Gastrocnemius medialis (tissue), 4 donors: ENCODE measurements at regions of chr3 and their contacts with region 1.

Region 1: GRCh38 chr3:196502775-196503195 is 783 bp downstream of the RNF168 start:
- DNase-seq: peak; percentile 18 to 50
- ATAC-seq: peak; percentile 46 to 49
- H3K4me3 ChIP-seq: peak overlapping the region; percentile 87 to 92 (median 88)
- H3K27ac ChIP-seq: peak overlapping the region; percentile 91 to 95 (median 93)
- H3K4me1 ChIP-seq: peaks cover 18 to 22% of the 10 kb centered on the region in 2 donors
- H3K27me3 ChIP-seq: no peaks in the 10 kb centered on the region
- CTCF ChIP-seq: no peak
- POLR2A ChIP-seq: no peak

Region 2: DNA sequence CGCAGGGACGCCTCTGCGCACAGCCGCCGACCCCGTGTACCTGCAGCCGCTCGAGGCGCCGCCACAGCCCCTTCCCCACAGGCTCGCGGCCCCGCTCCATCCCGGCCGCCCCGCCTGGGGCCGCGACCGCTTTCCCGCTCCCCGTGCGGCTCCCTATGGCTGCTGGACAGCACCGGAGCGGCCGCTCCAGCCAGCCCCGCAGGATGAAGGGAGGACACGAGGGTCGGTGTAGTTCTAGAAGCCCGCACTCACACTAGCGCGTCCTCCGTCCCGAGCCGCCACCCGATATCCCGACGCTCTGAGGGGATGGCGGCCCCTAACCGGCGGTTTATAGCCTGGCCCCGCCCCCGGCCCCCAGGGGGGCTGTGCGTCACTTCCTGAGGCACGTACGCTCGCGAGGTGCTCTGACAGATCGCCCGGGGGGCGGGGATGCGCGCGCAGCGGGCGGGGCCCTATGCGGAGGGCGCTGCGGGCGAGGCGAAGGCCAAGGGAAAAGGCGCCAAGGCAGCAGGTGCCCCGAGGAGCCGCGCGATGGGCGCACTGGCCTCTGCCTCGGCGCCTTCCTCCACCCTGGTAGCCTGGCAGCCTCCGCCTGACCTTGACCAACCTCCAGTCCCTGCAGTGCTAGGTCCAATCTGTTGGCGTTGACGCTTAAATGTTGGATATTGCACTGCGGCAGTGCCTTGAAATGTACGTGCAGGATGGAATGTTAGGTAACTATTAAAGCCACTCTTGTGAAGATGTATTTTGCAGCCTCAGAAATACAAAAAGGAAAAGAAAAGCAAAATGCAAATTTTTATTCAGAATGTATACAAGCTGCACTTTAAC is 420.8 kb before region 1 on chr3 and contains the start of gene TFRC:
- in situ Hi-C with region 1: loop called in 1 of 4 experiments (anchors 25 kb)
- intact Hi-C with region 1: loop called (anchors 1 kb)
- DNase-seq: peak; percentile 90 to 98
- ATAC-seq: peak; percentile 86 to 95
- H3K4me3 ChIP-seq: peak within 1 kb of the TSS; percentile 70 to 98 (median 92)
- H3K27ac ChIP-seq: peak within 1 kb of the TSS; percentile 89 to 100 (median 98)
- H3K4me1 ChIP-seq: peaks cover 31 to 40% of the 10 kb centered on the region in 2 donors
- H3K27me3 ChIP-seq: no peaks in the 10 kb centered on the region
- CTCF ChIP-seq: no peak
- POLR2A ChIP-seq: peak; percentile 98 to 99
- total RNA-seq, gene TFRC: 23.1 to 162 (median 56.3) TPM

Region 3: GRCh38 chr3:196287440-196288148 is 215.2 kb before region 1 on chr3 and contains the start of gene PCYT1A:
- in situ Hi-C with region 1: no loop called
- intact Hi-C with region 1: loop called (anchors 1 kb)
- DNase-seq: peak; percentile 90 to 95
- ATAC-seq: peak; percentile 98
- H3K4me3 ChIP-seq: peak within 1 kb of the TSS; percentile 75 to 97 (median 93)
- H3K27ac ChIP-seq: peak within 1 kb of the TSS; percentile 98 to 100 (median 99)
- H3K4me1 ChIP-seq: peaks cover 40 to 43% of the 10 kb centered on the region in 2 donors
- H3K27me3 ChIP-seq: no peaks in the 10 kb centered on the region
- CTCF ChIP-seq: no peak
- POLR2A ChIP-seq: peak; percentile 93 to 97
- total RNA-seq, gene PCYT1A: 90.5 to 123 (median 99.0) TPM

Region 4: DNA sequence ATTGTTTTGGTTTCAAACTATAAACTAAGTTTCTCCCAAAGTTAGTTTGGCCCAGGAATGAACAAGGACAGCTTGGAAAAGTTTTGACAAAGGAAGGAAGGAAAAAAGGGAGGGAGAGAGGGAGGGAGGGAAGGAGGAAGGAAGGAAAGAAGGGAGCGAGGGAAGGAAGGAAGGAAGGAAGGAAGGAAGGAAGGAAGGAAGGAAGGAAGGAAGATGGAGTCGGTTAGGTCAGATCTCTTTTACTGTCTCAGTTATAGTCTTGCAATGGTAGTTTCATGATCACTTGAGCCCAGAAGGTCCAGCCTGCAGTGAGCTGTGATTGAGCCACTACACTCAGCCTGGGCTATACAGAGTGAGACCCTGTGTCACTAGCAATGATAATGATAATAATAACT is 58.3 kb before region 1 on chr3:
- in situ Hi-C with region 1: no loop called
- intact Hi-C with region 1: no loop called
- DNase-seq: no peak
- ATAC-seq: no peak
- H3K4me3 ChIP-seq: no peak overlapping the region
- H3K27ac ChIP-seq: no peak overlapping the region
- H3K4me1 ChIP-seq: no peaks in the 10 kb centered on the region
- H3K27me3 ChIP-seq: no peaks in the 10 kb centered on the region
- CTCF ChIP-seq: no peak
- POLR2A ChIP-seq: no peak